PC-9 (cell line): ENCODE measurements at regions of chr15 and their contacts with region 1.

Region 1: DNA sequence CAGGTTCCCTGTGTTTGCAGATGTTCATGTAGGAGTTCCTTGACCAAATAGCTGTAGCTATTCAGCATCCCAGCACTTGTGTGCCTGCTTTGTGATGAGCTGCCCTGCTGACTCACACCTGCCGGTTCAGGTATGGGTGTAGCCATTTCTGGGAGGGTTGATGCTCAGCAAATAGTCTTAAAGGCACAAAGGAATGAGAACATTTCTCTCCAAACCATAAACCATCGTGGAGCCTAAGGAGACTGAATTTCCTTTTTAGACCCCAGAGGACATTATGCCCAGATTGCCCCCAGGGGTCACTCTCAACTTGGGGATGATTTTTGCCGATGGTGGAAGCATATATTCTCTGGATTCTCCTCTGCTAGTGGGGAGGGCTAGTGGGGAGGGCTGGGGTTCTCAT is 80.6 kb downstream of the ADAMTSL3 start:
- DNase-seq: peak; percentile 67 to 73
- H3K4me3 ChIP-seq: no peak overlapping the region
- H3K27ac ChIP-seq: peak overlapping the region; percentile 95
- H3K4me1 ChIP-seq: peaks cover 33% of the 10 kb centered on the region
- H3K27me3 ChIP-seq: no peaks in the 10 kb centered on the region
- CTCF ChIP-seq: no peak; the same call in 1 of the 2 replicates

Region 2: GRCh38 chr15:83698294-83698693 is 36.2 kb before region 1 on chr15:
- CTCF ChIA-PET with region 1: no interaction called
- POLR2A ChIA-PET with region 1: no interaction called
- intact Hi-C with region 1: loop called (anchors 5 kb)
- DNase-seq: peak in 1 of 2 experiments; percentile 33
- H3K4me3 ChIP-seq: no peak overlapping the region
- H3K27ac ChIP-seq: no peak overlapping the region
- H3K4me1 ChIP-seq: peaks cover 13% of the 10 kb centered on the region
- H3K27me3 ChIP-seq: no peaks in the 10 kb centered on the region
- CTCF ChIP-seq: no peak

Region 3: DNA sequence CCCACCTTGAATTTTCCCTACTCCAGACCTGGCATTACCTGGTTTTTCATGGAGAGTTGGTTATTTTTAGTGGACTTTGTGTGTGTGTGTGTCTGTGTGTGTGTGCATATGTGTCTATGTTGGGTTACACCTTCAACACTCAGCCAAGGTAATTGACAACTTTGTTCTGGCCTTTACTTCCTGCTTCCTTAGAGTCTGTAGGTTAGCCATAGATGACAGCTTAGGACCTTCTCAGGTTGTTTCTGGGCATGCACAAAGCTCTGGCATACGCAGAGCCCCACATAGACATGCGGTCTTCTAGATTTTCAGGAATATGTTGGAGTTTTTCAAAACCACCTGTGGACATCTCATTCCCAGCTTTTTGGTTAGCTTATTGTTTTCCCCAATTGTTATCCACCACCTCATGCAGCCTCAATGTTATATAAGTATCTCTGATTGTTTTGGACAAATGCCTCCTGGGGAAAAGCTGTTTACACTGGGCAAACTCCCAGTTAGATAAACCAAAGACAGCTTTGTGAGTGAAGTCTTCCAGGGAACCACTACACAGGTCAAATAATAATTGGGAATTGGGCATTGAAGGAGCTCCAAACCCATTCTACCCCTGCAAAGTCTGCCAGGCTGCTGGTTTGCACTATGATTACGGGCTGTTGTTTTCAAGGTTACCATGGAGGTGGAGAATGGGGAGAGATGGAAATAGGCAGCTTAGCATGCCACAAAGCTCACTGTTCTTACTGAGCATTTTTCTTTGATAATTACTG is 120.6 kb after region 1 on chr15:
- CTCF ChIA-PET with region 1: no interaction called
- POLR2A ChIA-PET with region 1: no interaction called
- intact Hi-C with region 1: no loop called
- DNase-seq: no peak
- H3K4me3 ChIP-seq: no peak overlapping the region
- H3K27ac ChIP-seq: no peak overlapping the region
- H3K4me1 ChIP-seq: peaks cover 15% of the 10 kb centered on the region
- H3K27me3 ChIP-seq: no peaks in the 10 kb centered on the region
- CTCF ChIP-seq: no peak

Region 4: GRCh38 chr15:84035399-84035766 is 300.9 kb after region 1 on chr15:
- CTCF ChIA-PET with region 1: no interaction called
- POLR2A ChIA-PET with region 1: no interaction called
- intact Hi-C with region 1: loop called (anchors 10 kb)
- DNase-seq: no peak
- H3K4me3 ChIP-seq: no peak overlapping the region
- H3K27ac ChIP-seq: no peak overlapping the region
- H3K4me1 ChIP-seq: no peaks in the 10 kb centered on the region
- H3K27me3 ChIP-seq: no peaks in the 10 kb centered on the region
- CTCF ChIP-seq: peak; percentile 47